A673 (cell line): ENCODE measurements at regions of chr18 and their contacts with region 1.

Region 1: DNA sequence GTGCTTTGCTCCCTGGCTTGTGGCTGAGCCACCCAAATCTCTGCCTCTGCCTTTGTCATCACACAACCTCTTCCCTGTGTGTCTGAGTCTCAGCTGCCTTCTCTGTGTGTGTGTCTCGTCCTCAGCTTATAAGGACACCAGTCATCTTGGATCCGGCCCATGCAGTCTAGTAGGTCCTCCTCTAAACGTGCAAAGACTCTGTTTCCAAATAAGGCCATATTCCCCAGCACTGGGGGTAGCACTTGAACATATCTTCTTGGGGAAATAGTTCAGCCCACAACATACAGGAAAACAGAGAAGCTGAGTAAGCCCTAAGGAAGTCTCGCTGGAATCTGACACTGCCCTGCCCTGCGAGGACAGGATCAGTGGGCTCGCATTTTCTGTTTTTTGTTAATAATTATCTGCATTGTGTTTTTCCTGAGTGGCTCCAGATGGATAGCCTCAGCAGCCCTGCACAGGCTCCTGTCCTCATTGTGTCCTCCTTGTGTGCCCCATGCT is 42.1 kb downstream of the MTCL1 start:
- DNase-seq: no peak
- H3K4me3 ChIP-seq: no peak overlapping the region
- H3K27ac ChIP-seq: no peak overlapping the region
- H3K4me1 ChIP-seq: peaks cover 21% of the 10 kb centered on the region
- H3K27me3 ChIP-seq: no peaks in the 10 kb centered on the region
- CTCF ChIP-seq: no peak

Region 2: GRCh38 chr18:8673256-8674209 is 74.0 kb before region 1 on chr18:
- CTCF ChIA-PET with region 1: no interaction called
- POLR2A ChIA-PET with region 1: no interaction called
- intact Hi-C with region 1: loop called (anchors 10 kb)
- DNase-seq: no peak
- H3K4me3 ChIP-seq: no peak overlapping the region
- H3K27ac ChIP-seq: no peak overlapping the region
- H3K4me1 ChIP-seq: no peaks in the 10 kb centered on the region
- H3K27me3 ChIP-seq: no peaks in the 10 kb centered on the region
- CTCF ChIP-seq: no peak

Region 3: GRCh38 chr18:9102508-9103375 is 355.3 kb after region 1 on chr18 and contains the start of gene NDUFV2:
- CTCF ChIA-PET with region 1: no interaction called
- POLR2A ChIA-PET with region 1: no interaction called
- intact Hi-C with region 1: loop called (anchors 5 kb)
- DNase-seq: peak; percentile 98
- H3K4me3 ChIP-seq: peak within 1 kb of the TSS; percentile 68
- H3K27ac ChIP-seq: peak within 1 kb of the TSS; percentile 93
- H3K4me1 ChIP-seq: peaks cover 36% of the 10 kb centered on the region
- H3K27me3 ChIP-seq: no peaks in the 10 kb centered on the region
- CTCF ChIP-seq: no peak
- total RNA-seq, gene NDUFV2: 154 and 161 TPM in 2 replicates